ENCODE measurements at regions of chr2 and their contacts with region 1.

Region 1: GRCh38 chr2:169694113-169694903 is at the starts of genes CFAP210 and PHOSPHO2:
- DNase-seq: peak; percentile 96 to 99 (median 98)
- ATAC-seq: peak; percentile 96
- H3K4me3 ChIP-seq: peak within 1 kb of the TSS; percentile 61
- H3K4me3 Mint-ChIP-seq: peak within 1 kb of the TSS; percentile 86 to 98 (median 90)
- H3K27ac ChIP-seq: peak within 1 kb of the TSS; percentile 87
- H3K27ac Mint-ChIP-seq: peak within 1 kb of the TSS; percentile 88 to 100 (median 99)
- H3K4me1 ChIP-seq: peaks cover 5 to 6% of the 10 kb centered on the region in 2 donors
- H3K4me1 Mint-ChIP-seq: peaks cover 5 to 22% (median 18%) of the 10 kb centered on the region in 7 donors
- H3K27me3 ChIP-seq: no peaks in the 10 kb centered on the region
- H3K27me3 Mint-ChIP-seq: peaks cover 0 to 30% (median 10%) of the 10 kb centered on the region in 5 donors
- total RNA-seq, gene CFAP210: 1.0 to 3.6 TPM in 2 of 5 experiments, not detected in the others
- total RNA-seq, gene PHOSPHO2: 4.5 to 9.5 (median 7.5) TPM

Region 2: GRCh38 chr2:169479257-169480078 is 214.8 kb before region 1 on chr2 and contains the start of gene BBS5:
- CTCF ChIA-PET with region 1: no interaction called
- POLR2A ChIA-PET with region 1: no interaction called
- intact Hi-C with region 1: loop called (anchors 2 to 5 kb)
- DNase-seq: peak; percentile 55 to 78 (median 74)
- ATAC-seq: peak; percentile 93
- H3K4me3 ChIP-seq: peak within 1 kb of the TSS; percentile 87
- H3K4me3 Mint-ChIP-seq: peak within 1 kb of the TSS; percentile 89 to 96 (median 92)
- H3K27ac ChIP-seq: peak within 1 kb of the TSS; percentile 49
- H3K27ac Mint-ChIP-seq: peak within 1 kb of the TSS; percentile 37 to 86 (median 69)
- H3K4me1 ChIP-seq: peaks cover 0 to 3% of the 10 kb centered on the region in 2 donors
- H3K4me1 Mint-ChIP-seq: peaks cover 12 to 30% (median 22%) of the 10 kb centered on the region in 7 donors
- H3K27me3 ChIP-seq: no peaks in the 10 kb centered on the region
- H3K27me3 Mint-ChIP-seq: no peaks in the 10 kb centered on the region
- total RNA-seq, gene BBS5: 2.0 to 3.8 (median 2.6) TPM

Region 3: GRCh38 chr2:169584005-169584877 is 110.1 kb before region 1 on chr2 and contains the start of gene PPIG:
- CTCF ChIA-PET with region 1: no interaction called
- POLR2A ChIA-PET with region 1: interaction called, 3 read pairs
- intact Hi-C with region 1: loop called (anchors 1 kb)
- DNase-seq: peak; percentile 71 to 90 (median 85)
- ATAC-seq: peak; percentile 94
- H3K4me3 ChIP-seq: peak within 1 kb of the TSS; percentile 89
- H3K4me3 Mint-ChIP-seq: peak within 1 kb of the TSS; percentile 90 to 100 (median 99)
- H3K27ac ChIP-seq: peak within 1 kb of the TSS; percentile 99
- H3K27ac Mint-ChIP-seq: peak within 1 kb of the TSS; percentile 97 to 100 (median 100)
- H3K4me1 ChIP-seq: peaks cover 17 to 29% of the 10 kb centered on the region in 2 donors
- H3K4me1 Mint-ChIP-seq: peaks cover 12 to 46% (median 40%) of the 10 kb centered on the region in 7 donors
- H3K27me3 ChIP-seq: no peaks in the 10 kb centered on the region
- H3K27me3 Mint-ChIP-seq: peaks cover 0 to 4% (median 0%) of the 10 kb centered on the region in 5 donors
- total RNA-seq, gene PPIG: 50.6 to 86.1 (median 73.7) TPM

Region 4: DNA sequence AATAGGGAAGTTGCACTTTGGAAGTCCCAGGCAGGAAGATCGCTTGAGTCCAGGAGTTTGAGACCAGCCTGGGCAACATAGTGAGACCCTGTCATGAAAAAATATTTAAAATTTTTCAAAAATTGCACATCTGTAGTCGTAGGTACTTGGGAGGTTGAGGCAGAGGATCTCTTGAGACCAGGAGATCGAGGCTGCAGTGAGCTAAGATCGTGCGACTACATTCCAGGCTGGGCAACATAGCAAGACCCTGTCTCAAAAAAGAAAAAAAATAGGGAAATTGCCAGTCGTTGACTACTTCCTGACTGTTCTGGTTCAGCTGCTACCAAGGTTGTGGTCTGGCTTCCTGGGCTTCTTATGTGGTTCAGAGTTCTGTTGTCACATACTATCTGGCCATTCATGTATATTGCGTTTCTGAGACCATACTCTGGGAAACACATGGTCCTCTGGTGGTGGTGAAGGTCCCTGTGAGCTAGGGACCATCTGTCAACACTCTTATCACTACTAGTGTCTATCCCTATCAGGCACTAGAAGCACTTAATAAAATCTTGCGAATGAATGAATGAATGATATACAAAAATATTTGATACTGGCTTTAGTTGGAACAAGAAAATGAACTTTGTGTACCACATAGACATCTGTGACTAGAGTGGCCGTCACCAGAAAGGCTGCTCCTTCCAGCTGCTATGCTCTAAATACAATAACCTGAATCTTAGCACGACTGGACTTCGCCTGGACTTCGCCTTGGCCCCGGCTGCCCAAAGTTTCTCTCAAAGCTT is 38.5 kb after region 1 on chr2:
- CTCF ChIA-PET with region 1: no interaction called
- POLR2A ChIA-PET with region 1: no interaction called
- intact Hi-C with region 1: loop called in 1 of 2 experiments (anchors 2 kb)
- DNase-seq: peak in 1 of 9 donors; percentile 1
- ATAC-seq: peak; percentile 29
- H3K4me3 ChIP-seq: no peak overlapping the region
- H3K4me3 Mint-ChIP-seq: peak overlapping the region; percentile 86 to 96 (median 91)
- H3K27ac ChIP-seq: no peak overlapping the region
- H3K27ac Mint-ChIP-seq: peak overlapping the region in 1 of 9 donors; percentile 66
- H3K4me1 ChIP-seq: peaks cover 7 to 8% of the 10 kb centered on the region in 2 donors
- H3K4me1 Mint-ChIP-seq: peaks cover 9 to 23% (median 18%) of the 10 kb centered on the region in 7 donors
- H3K27me3 ChIP-seq: peaks cover 0 to 22% of the 10 kb centered on the region in 2 donors
- H3K27me3 Mint-ChIP-seq: peaks cover 26 to 51% (median 45%) of the 10 kb centered on the region in 5 donors

Measured in naive thymus-derived CD4-positive, alpha-beta T cell (primary cell).